Dendritic cell treated with granulocyte-macrophage colony-stimulating factor and Interleukin-4, amounts not matched to agents 40 ng/mL and 50 ng/mL, for 4 days (primary cell): ENCODE measurements at regions of chr9 and their contacts with region 1.

Region 1: DNA sequence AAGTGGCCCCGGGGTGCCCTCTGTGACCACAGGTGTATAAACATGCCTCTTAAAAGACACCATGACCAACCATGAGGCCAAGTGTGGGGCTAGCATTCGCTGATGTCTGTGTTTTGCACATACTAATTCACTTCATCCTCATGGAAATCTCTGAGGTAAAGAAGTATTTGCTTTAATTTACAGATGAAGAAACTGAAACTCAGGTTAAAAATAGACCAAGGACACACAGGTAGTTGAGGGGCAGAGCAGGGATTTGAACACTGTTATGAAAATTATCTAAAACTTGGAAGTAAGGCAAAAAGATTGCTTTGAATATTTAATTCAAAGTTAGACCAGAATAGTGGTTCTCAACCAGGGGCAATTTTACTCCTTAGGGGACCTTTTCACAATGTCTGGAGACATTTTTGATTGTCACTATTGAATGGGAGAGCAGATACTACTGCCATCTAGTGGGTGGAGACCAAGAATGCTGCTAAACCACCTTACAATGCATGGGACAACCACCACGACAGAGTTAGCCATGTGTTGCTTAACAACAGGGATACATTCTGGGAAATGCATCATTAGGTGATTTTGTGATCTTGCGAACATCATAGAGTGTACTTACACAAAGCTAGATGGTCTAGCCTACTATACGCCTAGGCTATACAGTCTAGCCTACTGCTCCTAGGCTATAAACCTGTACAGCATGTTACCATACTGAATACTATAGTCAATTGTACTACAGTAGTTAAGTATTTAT is 8.0 kb upstream of the FXN start:
- H3K4me3 Mint-ChIP-seq: no peak overlapping the region
- H3K27ac Mint-ChIP-seq: no peak overlapping the region
- H3K4me1 Mint-ChIP-seq: peaks cover 25% of the 10 kb centered on the region
- H3K27me3 Mint-ChIP-seq: peaks cover 5% of the 10 kb centered on the region

Region 2: DNA sequence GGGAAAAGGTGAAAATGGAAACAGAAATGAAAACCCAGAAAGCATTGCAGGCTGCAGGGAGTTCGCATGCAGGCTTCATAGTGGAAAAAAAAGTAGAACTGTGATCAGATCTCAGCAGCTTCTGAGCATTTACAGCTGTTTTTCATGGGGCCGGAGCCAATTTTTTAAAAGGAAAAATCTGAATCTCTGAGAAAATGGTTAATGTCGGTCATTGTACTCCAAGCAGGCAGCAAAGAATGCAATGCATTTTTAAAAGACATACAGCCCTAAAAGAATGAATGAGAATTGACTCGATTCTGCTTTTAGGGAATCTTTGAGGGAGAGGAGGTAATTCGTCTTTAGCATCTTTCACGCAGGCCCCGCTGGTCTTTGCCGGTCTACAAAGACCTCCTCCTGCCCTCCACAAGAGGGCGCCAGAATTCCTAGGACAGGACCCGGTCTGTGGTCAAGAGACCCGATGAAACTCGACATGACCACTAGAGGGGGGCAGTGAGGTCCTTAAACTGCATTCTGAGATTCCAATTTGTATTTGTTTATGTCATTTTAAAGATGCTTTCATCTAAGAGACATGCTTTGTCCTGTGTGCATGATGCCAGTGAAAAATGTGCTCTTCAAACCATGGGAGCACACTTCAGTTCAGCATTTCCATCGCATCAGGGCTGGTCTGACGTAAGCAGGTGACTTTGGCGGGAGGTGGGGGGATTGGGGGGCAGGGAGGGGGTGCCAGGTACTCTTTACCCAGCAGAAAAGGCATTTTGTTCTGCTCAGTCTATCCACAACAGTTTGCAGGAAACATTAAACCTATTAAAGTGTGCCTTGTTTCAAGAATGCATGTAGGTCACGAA is 443.1 kb before region 1 on chr9:
- intact Hi-C with region 1: loop called (anchors 1 kb)
- H3K4me3 Mint-ChIP-seq: no peak overlapping the region
- H3K27ac Mint-ChIP-seq: no peak overlapping the region
- H3K4me1 Mint-ChIP-seq: peaks cover 15% of the 10 kb centered on the region
- H3K27me3 Mint-ChIP-seq: peaks cover 3% of the 10 kb centered on the region

Region 3: GRCh38 chr9:68981789-68982188 is 45.7 kb before region 1 on chr9:
- intact Hi-C with region 1: no loop called
- H3K4me3 Mint-ChIP-seq: no peak overlapping the region
- H3K27ac Mint-ChIP-seq: peak overlapping the region; percentile 52
- H3K4me1 Mint-ChIP-seq: peaks cover 65% of the 10 kb centered on the region
- H3K27me3 Mint-ChIP-seq: no peaks in the 10 kb centered on the region

Region 4: DNA sequence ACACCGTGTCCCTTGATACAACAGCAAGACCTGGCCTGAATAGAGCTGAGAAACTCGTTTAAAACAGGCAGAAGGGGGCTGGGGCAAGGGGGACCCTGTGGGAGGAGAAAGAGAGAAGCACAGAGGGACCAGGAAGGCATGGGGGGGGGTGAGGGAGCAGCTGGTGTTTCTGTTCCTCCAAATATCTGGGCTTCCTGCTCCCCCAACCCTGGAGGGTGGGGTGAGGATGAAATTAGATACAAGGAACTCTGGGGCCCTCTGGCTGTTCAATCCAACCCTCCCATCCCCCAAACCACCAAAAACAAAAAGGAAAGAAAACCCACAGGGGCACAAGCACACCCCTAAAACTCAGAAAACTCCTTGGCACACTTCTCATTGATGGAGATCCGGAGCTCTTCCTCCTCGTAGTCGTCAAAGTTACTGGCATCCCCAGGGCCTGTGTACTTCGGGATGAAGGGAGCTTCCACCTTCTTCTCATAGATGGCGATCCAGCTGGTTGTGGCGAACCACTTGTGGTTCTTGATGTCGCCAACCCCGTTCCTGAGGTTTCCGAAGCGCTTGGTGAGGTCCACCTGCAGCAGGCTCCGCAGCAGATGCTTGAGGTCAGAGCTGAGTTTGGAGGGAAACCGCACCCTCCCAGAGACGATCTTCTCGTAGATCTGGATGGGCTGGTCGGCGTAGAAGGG is 14.7 kb before region 1 on chr9:
- intact Hi-C with region 1: no loop called
- H3K4me3 Mint-ChIP-seq: peak overlapping the region; percentile 33
- H3K27ac Mint-ChIP-seq: peak overlapping the region; percentile 64
- H3K4me1 Mint-ChIP-seq: peaks cover 31% of the 10 kb centered on the region
- H3K27me3 Mint-ChIP-seq: peaks cover 5% of the 10 kb centered on the region

Region 5: GRCh38 chr9:69223605-69224004 is 196.1 kb after region 1 on chr9:
- intact Hi-C with region 1: no loop called
- H3K4me3 Mint-ChIP-seq: no peak overlapping the region
- H3K27ac Mint-ChIP-seq: no peak overlapping the region
- H3K4me1 Mint-ChIP-seq: no peaks in the 10 kb centered on the region
- H3K27me3 Mint-ChIP-seq: no peaks in the 10 kb centered on the region